ENCODE measurements at regions of chr1 and their contacts with region 1.

Region 1: DNA sequence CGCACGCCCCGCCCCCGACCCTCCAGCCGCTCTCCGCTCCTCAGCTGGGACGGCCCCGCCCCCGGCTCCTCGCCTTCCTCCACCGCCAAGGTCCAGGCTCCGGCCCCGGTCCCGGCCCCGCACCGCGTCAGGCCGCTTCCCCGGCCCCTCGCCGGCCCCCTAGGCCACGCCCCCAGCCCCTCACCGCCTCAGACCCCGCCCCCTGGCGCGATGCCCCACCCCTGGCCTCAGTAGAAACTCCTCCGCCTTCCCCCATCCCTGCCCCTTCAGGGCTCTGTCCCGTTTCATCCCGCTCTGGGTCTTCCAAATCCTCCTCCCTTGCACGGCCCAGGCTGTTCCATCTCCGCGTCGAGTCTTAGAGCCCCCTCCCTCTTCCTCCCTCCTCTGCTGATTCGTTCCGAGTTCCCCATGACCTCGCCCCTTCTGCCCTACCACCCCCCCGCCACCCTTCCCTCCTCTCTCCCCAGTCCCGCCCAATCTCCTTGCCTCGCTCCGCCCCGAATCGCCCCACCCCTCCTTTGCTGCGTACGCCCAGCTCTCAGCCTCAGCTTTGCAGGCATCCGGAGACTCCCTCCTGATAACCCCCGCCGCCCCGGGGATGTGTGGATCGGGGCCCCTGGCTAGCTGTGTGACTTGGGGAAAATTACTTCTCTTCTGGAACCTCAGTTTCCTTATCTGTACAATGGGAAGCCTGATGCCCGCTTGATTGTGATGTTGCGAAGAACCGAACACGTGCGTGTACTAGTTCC is 448 bp upstream of the ASAP3 start:
- DNase-seq: peak; percentile 67 to 96
- H3K4me3 ChIP-seq: peak overlapping the region; percentile 87 to 96
- H3K27ac ChIP-seq: peak overlapping the region; percentile 88 to 89
- H3K4me1 ChIP-seq: peaks cover 5 to 13% of the 10 kb centered on the region in 2 donors
- H3K27me3 ChIP-seq: no peaks in the 10 kb centered on the region
- CTCF ChIP-seq: no peak

Region 2: DNA sequence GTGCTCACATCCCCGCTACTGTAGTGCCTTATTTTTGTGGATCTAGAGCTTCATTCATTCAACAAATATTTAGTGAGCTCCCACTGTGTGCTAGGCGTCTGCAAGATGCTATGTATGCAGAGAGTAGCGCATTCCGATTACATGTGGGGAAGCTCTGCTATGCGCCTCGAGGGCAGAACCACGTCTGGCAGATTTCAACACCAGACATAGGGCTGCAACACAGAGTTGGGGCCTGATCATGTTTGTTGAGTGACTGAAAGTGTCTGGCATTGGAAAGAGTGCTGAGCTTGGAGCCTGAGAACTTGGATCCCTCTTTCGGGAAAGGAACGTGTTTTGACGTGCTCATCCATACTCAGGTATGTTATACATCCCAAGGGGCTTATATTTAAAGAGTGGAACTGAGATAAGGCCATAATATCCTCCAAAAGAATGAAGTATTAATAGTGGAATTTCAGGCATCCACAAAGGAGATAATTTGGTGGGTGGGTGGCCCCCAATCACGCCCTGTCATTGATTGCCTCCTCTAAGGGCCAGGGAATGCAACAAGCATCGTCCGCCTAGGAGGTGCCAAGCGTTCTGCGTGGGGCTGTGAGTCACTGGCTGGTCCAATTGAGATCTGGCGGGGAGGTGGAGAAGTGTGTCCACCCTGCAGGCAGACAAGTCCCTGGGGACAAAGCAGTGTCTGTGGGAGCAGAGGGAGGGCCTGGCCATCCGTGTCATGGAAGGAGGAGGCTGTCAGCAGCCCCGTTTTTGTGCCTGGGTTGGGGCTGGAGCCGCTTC is 1095.6 kb before region 1 on chr1:
- intact Hi-C with region 1: no loop called
- DNase-seq: no peak
- H3K4me3 ChIP-seq: no peak overlapping the region
- H3K27ac ChIP-seq: no peak overlapping the region
- H3K4me1 ChIP-seq: no peaks in the 10 kb centered on the region
- H3K27me3 ChIP-seq: no peaks in the 10 kb centered on the region
- CTCF ChIP-seq: no peak

Region 3: DNA sequence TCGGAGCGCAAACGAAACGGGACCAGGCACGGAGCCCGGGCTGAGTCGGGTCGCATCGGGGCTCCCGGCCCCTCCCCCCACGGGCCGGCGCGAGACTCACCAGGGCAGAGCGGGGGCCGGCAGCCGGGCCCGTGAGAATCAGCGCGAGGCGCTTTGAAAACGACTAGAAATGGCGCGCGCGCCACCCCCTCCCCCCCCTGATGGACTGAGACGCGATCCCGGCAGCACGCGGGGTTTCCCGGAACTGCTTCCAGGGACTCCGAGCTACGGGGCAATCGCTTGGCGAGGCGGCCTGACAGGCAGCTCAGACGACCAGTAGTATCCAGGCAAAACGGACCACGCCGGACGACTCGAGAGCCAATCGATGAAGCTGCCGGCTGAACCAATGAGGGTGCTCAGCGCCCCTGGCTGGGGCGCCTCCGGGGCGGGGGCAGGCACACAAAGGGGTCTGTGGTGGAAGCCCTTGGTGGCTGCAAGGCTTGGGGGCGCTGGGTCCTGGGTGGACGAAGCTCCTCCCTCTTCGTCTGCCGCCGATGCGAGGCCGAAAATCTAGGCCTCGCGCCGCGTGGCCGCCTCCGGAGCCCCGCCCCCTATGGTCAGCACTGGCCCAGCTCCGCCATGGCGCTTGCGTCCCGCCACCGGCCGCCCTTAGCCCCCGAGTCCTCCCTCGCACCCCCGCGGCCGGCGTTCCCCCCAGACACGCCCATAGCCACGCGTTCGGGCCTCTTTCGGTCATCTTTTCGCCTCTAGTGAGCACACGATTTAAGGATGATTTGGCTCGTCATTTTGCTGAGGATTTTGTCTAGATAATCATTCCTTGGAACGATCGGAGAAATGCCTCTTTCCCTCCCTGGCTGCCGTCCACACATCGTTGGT is 140.1 kb before region 1 on chr1 and contains the start of gene HNRNPR:
- intact Hi-C with region 1: loop called (anchors 1 kb)
- DNase-seq: peak; percentile 98 to 100
- H3K4me3 ChIP-seq: peak within 1 kb of the TSS; percentile 94 to 95
- H3K27ac ChIP-seq: peak within 1 kb of the TSS; percentile 97 to 100
- H3K4me1 ChIP-seq: peaks cover 10 to 26% of the 10 kb centered on the region in 2 donors
- H3K27me3 ChIP-seq: no peaks in the 10 kb centered on the region
- CTCF ChIP-seq: peak in 1 of 3 experiments; percentile 7
- total RNA-seq, gene HNRNPR: 21.5 TPM

Region 4: DNA sequence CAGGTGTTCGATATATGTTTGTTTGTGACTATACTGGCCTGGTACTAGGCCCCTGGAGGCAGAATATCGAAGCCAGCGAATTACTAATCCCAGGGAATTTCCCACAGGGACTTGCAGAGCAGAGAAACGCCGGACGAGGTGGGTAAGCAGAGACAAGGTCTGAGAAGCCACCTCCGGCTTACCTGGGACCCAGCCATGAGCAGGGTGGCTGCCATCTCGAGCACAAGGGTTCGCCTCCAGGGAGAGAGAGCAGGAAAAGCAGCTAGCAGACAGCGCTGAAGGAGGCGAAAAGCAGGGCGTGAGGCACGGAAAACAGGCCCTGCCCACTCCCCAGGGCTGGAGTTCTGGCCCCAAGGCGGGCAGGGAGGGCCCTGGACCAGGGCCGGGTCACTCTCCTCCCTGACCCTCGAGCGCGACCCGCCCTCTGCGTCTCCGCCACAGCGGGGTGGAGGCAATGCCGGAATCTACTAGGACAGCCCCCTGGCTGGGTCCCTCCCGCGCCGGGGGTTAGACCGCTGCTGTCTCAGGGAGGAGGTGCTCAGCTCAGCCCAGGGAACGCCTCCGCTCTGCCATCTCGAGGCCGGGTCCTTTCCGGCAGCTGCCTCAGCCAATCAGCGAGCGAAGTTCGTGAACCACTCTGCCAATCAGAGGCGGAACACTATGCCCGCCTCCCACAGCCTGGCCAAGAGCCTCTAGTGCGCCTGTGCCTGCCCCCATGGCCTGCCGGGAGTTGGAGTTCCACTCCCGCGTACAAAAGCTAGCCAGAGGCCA is 116.5 kb before region 1 on chr1:
- intact Hi-C with region 1: loop called (anchors 1 kb)
- DNase-seq: peak; percentile 96 to 99
- H3K4me3 ChIP-seq: peak overlapping the region; percentile 76 to 78
- H3K27ac ChIP-seq: peak overlapping the region; percentile 98
- H3K4me1 ChIP-seq: peaks cover 9 to 26% of the 10 kb centered on the region in 2 donors
- H3K27me3 ChIP-seq: no peaks in the 10 kb centered on the region
- CTCF ChIP-seq: no peak

Region 5: GRCh38 chr1:23422241-23423030 is 62.0 kb before region 1 on chr1:
- intact Hi-C with region 1: loop called (anchors 5 kb)
- DNase-seq: peak; percentile 39 to 86
- H3K4me3 ChIP-seq: peak overlapping the region; percentile 30 to 91
- H3K27ac ChIP-seq: peak overlapping the region; percentile 85 to 86
- H3K4me1 ChIP-seq: peaks cover 0 to 23% of the 10 kb centered on the region in 2 donors
- H3K27me3 ChIP-seq: no peaks in the 10 kb centered on the region
- CTCF ChIP-seq: no peak

Region 6: GRCh38 chr1:23530747-23531561 is 46.5 kb after region 1 on chr1 and contains the start of gene E2F2:
- intact Hi-C with region 1: loop called (anchors 2 kb)
- DNase-seq: peak in 1 of 2 donors; percentile 89
- H3K4me3 ChIP-seq: peak within 1 kb of the TSS; percentile 44 to 76
- H3K27ac ChIP-seq: no peak within 1 kb of the TSS
- H3K4me1 ChIP-seq: peaks cover 8 to 14% of the 10 kb centered on the region in 2 donors
- H3K27me3 ChIP-seq: no peaks in the 10 kb centered on the region
- CTCF ChIP-seq: peak in 2 of 3 experiments; percentile 18 to 31
- total RNA-seq, gene E2F2: not detected

Region 7: GRCh38 chr1:23544444-23545389 is 60.3 kb after region 1 on chr1:
- intact Hi-C with region 1: no loop called
- DNase-seq: peak in 1 of 2 donors; percentile 86
- H3K4me3 ChIP-seq: no peak overlapping the region
- H3K27ac ChIP-seq: no peak overlapping the region
- H3K4me1 ChIP-seq: peaks cover 0 to 11% of the 10 kb centered on the region in 2 donors
- H3K27me3 ChIP-seq: no peaks in the 10 kb centered on the region
- CTCF ChIP-seq: peak; percentile 82 to 95 (median 89)

Region 8: GRCh38 chr1:23634842-23635651 is 150.6 kb after region 1 on chr1:
- intact Hi-C with region 1: loop called (anchors 5 kb)
- DNase-seq: peak in 1 of 2 donors; percentile 85
- H3K4me3 ChIP-seq: peak overlapping the region; percentile 58 to 68
- H3K27ac ChIP-seq: peak overlapping the region; percentile 89 to 91
- H3K4me1 ChIP-seq: peaks cover 0 to 3% of the 10 kb centered on the region in 2 donors
- H3K27me3 ChIP-seq: no peaks in the 10 kb centered on the region
- CTCF ChIP-seq: peak; percentile 84 to 94 (median 89)

Region 9: GRCh38 chr1:23979878-23980724 is 495.7 kb after region 1 on chr1 and contains the start of gene SRSF10:
- intact Hi-C with region 1: loop called (anchors 5 kb)
- DNase-seq: peak; percentile 92 to 99
- H3K4me3 ChIP-seq: peak within 1 kb of the TSS; percentile 90 to 91
- H3K27ac ChIP-seq: peak within 1 kb of the TSS; percentile 96 to 98
- H3K4me1 ChIP-seq: peaks cover 3 to 32% of the 10 kb centered on the region in 2 donors
- H3K27me3 ChIP-seq: no peaks in the 10 kb centered on the region
- CTCF ChIP-seq: peak in 2 of 3 experiments; percentile 35 to 44
- total RNA-seq, gene SRSF10: 80.6 TPM